Right ventricle myocardium inferior (tissue), 1 donor: ENCODE measurements at regions of chr15 and their contacts with region 1.

Region 1: DNA sequence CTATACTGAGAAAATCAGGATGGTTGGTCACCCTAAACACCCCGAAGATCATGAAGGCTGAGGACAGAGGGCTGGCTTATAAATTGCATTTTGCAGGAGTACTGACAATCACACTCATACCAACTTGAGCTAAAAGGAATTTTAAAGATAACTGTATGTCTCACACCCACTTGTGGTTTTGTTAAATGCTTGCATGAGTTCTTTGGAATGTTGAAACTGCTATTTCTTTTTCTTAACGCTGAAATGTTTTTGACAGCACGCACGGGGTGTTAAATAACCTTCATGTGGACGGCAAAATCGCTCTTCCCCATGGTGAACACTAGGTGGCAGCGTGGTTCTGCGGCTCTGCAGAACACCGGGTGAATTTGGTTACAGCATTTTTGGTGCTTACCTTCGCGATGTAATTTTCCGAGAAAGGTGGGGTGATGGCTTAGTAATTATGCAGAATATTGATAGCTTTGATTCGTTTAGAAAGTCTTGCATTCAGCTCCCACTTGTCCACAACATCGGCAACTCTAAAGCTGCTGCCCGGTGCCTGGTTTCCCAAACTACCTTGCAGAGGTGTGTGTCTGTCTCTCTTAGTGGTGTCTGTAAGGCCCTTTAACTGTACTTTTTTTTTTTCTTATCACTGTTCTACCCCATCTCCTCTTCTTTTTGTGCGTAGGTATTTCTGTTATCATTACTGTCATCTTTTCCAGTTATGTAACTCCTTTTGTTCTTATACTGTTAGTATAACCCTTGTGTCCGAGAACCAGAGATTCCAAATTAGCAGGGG is 51.7 kb downstream of the ARNT2 start:
- DNase-seq: no peak
- ATAC-seq: peak; percentile 55

Region 2: DNA sequence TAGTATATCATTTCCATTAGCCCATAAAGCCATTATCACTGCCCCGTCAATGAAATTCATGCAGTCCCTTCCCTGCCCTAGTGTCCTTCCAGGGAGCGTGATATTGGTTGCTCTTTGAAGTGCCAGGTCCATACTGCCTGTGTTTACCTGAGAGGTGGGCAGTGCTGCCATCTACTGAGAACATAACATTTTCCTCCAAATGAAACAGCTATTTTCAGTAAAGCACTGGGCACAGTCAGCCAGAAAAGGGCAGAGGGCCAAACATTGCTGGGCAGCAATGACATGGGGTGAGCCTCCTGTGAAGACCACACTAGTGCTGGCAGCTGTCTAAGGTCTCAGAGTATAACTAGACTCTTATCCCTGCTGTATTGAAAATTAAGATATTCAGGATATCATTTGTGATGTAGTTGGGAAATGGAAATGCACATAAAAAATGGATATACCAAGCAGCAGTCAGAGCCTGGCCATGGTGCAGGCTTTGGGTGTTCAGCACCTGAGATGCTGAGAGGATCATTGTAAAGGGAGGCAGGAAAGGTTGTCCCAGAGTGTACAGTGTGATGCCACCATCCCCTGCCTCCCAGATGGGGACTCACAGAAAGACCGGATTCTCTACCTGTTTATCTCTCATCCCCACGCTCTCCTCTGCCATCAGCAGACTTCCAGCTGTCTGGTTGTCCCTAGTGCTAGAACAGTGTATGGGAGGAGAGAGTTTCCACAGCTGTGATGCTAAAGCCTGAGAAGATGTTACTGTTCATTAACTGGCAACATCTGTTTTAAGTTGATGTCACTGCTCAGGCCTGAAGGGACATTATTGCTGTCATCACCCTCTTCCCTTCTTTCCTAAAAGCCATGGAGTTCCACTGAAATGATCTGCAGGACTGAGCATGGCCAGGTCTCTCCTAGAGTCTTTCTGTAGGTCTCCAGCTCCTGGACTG is 57.1 kb after region 1 on chr15:
- intact Hi-C with region 1: loop called (anchors 5 kb)
- DNase-seq: no peak
- ATAC-seq: peak; percentile 68

Region 3: GRCh38 chr15:80567721-80568157 is 111.9 kb after region 1 on chr15:
- intact Hi-C with region 1: loop called (anchors 10 kb)
- DNase-seq: no peak
- ATAC-seq: peak; percentile 79

Region 4: GRCh38 chr15:80970018-80970658 is 514.3 kb after region 1 on chr15:
- intact Hi-C with region 1: loop called (anchors 2 kb)
- DNase-seq: no peak
- ATAC-seq: peak; percentile 63